Cardiac septum (tissue), 1 donor: ENCODE measurements at regions of chr2 and their contacts with region 1.

Region 1: DNA sequence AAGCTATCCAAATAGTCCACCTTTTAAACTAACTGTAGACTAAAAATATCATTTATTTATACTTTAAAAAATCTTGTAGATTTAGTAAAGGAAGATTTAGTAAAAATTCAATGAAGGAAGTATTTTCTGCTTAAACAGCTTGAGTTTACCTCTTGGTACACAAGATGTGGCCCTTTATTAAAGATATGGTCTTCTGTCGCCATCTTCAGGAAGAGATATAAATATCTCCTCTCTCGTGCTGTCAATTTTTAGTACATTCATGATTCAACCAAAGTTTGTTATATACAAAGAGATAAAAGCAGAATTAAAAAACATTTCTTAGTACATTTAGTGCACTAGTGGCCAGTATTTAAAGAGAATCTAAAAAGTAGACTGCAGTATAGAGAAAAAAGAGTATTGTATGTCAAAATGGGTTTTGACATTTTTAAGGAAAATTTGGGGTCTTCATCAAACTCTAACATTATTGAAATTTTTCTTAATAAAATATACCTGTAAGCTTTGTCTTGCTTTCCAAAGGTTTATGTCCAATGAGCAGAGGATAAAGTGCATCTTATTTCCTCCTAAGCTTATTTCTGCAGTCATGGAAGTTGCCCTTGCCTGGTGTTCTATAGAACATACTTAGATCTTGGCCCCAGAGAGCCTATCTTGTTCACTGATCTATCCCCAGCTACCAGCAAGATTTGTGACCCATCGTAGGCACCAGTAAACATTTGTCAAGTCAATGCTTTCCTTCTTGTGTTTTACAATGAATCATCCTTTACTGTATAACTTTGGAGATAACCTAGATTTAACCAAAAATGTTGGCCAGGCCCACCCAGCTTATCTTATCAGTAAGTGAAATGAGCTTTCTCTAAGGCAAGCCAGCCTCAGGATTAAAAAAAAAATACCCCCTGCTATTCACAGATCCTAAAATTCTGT is 18.5 kb upstream of the EML6 start:
- DNase-seq: no peak

Region 2: DNA sequence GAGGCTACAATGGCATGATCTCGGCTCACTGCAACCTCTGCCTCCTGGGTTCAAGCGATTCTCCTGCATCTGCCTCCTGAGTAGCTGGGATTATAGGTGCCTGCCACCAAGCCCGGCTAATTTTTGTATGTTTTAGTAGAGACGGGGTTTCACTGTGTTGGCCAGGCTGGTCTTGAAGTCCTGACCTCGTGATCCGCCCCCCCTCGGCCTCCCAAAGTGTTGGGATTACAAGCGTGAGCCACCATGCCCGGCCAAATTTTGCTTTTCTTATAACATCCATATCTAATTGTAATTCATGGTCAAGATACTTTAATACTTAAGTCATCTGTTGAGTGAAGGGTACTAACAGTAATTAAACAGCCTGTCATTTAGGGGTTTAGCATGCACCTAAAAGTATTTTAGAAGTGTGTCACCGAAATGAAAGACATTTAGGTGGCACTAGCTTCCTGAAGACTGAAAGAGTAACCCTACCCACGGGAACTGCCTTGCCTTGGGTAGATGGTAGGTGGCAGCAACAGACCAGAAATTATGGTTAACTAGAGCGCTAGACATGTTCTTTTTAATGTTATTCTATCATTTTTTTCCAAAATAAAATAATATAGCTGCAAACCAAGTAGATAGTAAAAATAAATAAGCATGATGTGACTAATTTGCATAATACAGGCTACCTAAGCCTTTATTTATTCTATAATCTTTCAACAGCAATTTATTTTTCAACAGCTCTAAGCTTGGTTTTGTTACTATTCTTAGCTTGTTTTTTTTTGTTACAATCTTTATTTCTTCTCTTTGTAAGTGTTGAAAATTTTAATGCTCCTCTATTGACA is 598.1 kb before region 1 on chr2:
- intact Hi-C with region 1: loop called (anchors 5 kb)
- DNase-seq: no peak

Region 3: DNA sequence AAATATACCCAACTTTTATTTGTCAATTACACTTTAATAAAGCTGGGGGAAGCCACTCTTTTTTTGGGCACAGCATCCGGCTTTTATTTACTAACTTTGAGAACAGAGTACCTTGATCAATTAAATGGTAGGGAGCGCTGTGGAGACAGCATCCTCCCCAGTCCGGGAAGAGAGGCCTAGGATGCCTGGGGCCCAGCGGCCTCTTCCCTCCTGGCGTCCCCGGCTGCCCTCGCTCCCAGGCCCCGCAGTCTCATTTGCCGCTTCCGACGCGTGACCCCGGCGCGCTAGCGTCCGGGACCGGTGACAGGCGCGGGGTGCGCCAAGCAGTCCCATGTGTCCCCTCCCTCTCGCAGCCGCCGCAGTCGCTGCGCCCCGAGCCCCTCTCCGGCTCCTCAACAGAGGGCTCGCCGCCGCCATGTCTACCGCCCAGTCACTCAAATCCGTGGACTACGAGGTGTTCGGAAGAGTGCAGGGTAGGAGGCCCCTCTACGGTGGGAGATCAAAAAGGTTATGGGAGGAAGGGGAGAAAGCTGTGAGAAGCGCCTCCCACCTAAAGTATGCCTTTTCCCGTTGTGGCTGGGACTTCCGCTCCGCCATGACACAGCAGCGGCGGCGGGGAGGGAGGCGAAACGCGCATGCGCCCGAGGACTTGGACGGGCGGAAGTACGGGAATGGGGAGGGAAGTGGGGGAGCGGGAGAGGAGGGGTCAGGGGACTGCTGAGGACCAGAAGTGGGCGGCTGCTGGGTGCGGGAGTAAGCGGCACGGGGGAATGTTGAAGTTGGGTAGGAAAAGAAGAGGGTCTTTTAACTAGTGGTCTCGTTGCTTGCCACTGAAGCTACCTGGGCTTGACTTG is 589.4 kb before region 1 on chr2 and contains the start of gene ACYP2:
- intact Hi-C with region 1: loop called (anchors 5 kb)
- DNase-seq: peak; percentile 98
- total RNA-seq, gene ACYP2: 86.1 TPM

Region 4: DNA sequence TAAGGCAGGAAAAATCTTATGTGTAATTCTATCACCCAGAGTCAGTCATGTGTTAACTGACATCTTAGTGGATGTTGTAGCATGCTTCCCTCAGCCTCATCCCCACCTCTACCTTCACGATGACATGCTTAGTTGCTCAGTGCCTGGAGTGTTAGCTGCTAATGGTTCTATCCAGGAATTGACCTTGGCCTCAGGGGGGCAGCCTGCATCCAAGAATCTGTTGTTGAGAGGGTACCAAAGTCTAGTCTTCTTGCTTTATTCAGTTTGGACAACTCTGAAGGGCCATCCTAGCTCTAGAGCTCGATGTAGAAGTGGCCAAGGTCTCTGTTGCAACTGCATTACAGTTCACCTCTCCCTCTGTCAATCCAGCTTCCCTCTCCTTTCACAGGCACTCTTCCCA is 528.4 kb before region 1 on chr2:
- intact Hi-C with region 1: loop called (anchors 10 kb)
- DNase-seq: no peak

Region 5: GRCh38 chr2:54522624-54523281 is 182.2 kb before region 1 on chr2:
- intact Hi-C with region 1: loop called (anchors 5 kb)
- DNase-seq: no peak